Esophagus muscularis mucosa (tissue), 4 donors: ENCODE measurements at regions of chr21 and their contacts with region 1.

Region 1: DNA sequence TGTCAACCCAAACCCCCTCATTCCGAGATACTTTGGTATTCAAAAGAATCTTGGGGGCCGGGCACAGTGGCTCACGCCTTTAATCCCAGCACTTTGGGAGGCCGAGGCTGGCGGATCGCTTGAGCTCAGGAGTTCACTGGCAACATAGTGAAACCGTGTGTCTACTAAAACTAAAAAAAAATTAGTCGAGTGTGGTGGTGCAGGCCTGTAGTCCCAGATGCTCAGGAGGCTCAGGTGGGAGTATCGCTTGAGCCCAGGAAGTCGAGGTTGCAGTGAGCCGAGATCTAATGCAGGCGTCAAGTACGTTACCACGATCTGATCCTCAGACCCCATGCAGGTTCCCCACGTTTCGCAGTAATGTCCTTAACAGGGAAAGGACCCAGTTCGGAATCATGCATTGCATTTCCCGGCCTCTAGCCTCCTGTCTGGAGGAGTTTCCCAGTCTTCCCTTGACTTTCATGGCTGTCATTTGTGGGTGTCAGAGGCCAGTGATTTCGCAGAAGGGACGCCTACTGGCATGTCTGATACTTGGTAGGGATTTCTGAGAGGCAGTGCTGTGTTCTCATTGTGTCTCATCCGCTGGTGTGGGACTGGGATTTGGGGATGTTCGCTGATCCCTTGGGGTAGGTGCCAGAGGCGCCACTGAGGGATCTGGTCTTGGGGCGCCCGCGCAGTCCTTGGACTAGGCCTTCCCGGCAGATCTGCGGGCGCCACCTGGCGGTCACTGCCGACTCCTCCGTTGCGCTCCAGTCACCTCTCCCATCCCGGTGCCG is 39.3 kb upstream of the HMGN1 start:
- DNase-seq: peak; percentile 97
- H3K4me3 ChIP-seq: peak overlapping the region; percentile 48 to 64 (median 53)
- H3K27ac ChIP-seq: peak overlapping the region; percentile 75 to 84 (median 79)
- H3K4me1 ChIP-seq: peaks cover 34 to 63% (median 55%) of the 10 kb centered on the region in 4 donors
- H3K27me3 ChIP-seq: no peaks in the 10 kb centered on the region
- CTCF ChIP-seq: peak; percentile 85 to 99 (median 97)
- EP300 ChIP-seq: no peak
- POLR2A ChIP-seq: no peak

Region 2: GRCh38 chr21:39183237-39184007 is 204.8 kb before region 1 on chr21 and contains the start of gene PSMG1:
- intact Hi-C with region 1: loop called (anchors 10 kb)
- DNase-seq: peak; percentile 97
- H3K4me3 ChIP-seq: peak within 1 kb of the TSS; percentile 68 to 93 (median 90)
- H3K27ac ChIP-seq: peak within 1 kb of the TSS; percentile 83 to 93 (median 89)
- H3K4me1 ChIP-seq: peaks cover 8 to 34% (median 25%) of the 10 kb centered on the region in 4 donors
- H3K27me3 ChIP-seq: no peaks in the 10 kb centered on the region
- CTCF ChIP-seq: no peak
- EP300 ChIP-seq: no peak
- POLR2A ChIP-seq: peak; percentile 18
- total RNA-seq, gene PSMG1: 23.5 to 32.8 (median 25.1) TPM

Region 3: GRCh38 chr21:39313571-39314142 is 74.6 kb before region 1 on chr21 and contains the start of gene BRWD1:
- intact Hi-C with region 1: loop called (anchors 2 kb)
- DNase-seq: peak; percentile 94
- H3K4me3 ChIP-seq: peak within 1 kb of the TSS; percentile 83 to 96 (median 89)
- H3K27ac ChIP-seq: peak within 1 kb of the TSS; percentile 96 to 99 (median 98)
- H3K4me1 ChIP-seq: peaks cover 23 to 68% (median 55%) of the 10 kb centered on the region in 4 donors
- H3K27me3 ChIP-seq: no peaks in the 10 kb centered on the region
- CTCF ChIP-seq: peak; percentile 46 to 52 (median 49)
- EP300 ChIP-seq: no peak
- POLR2A ChIP-seq: peak; percentile 53
- total RNA-seq, gene BRWD1: 55.0 to 104 (median 67.9) TPM

Region 4: DNA sequence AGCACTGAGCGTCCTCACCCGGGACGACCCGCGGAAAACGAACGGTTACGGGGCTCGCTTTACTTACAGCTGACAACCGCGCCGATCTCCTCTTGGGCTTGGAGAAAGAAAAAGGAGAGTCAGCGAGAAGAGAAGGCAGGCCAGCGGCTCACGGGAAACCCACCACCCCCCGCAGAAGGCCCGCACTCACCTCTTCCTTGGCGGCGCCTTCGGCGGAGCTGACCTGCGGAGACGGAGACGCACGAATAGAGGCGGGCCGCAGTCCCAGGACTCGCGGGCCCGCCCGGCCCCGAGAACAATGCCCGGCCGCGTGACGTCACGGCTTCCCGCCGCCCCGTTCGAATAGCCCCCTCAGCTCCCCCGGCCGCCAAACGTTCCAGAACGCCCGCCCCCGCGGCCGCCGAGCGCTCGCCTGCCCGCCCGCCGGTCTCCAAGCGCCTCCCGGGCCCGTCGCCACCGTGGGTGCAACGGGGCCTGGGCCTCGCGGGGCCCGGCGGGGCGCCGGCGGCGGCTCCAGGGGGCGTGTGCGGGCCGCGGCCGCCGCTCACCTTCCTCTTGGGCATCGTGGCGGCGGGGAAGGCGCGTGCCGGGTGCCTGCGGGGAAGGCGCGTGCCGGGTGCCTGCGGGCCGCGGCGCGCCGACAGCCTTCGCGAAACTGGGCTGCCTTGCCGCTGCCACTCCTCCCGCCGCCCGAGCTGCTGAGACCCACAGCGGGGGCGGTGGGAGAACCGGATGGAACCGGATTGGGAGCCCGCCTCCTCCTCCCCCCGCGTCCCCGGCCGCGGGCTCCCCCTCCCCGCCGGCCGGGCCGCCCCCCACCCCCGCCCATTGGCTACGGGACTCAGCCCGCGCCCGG is 39.6 kb before region 1 on chr21 and contains the start of gene HMGN1:
- intact Hi-C with region 1: loop called (anchors 2 kb)
- DNase-seq: peak; percentile 94
- H3K4me3 ChIP-seq: peak within 1 kb of the TSS; percentile 79 to 86 (median 84)
- H3K27ac ChIP-seq: peak within 1 kb of the TSS; percentile 91 to 95 (median 94)
- H3K4me1 ChIP-seq: peaks cover 19 to 48% (median 42%) of the 10 kb centered on the region in 4 donors
- H3K27me3 ChIP-seq: no peaks in the 10 kb centered on the region
- CTCF ChIP-seq: peak in 1 of 3 experiments; percentile 23
- EP300 ChIP-seq: no peak
- POLR2A ChIP-seq: peak; percentile 34
- total RNA-seq, gene HMGN1: 69.1 to 77.4 (median 72.1) TPM

Region 5: GRCh38 chr21:39441502-39442475 is 53.6 kb after region 1 on chr21:
- intact Hi-C with region 1: loop called (anchors 5 kb)
- DNase-seq: no peak
- H3K4me3 ChIP-seq: no peak overlapping the region
- H3K27ac ChIP-seq: no peak overlapping the region
- H3K4me1 ChIP-seq: peaks cover 7 to 23% (median 16%) of the 10 kb centered on the region in 4 donors
- H3K27me3 ChIP-seq: no peaks in the 10 kb centered on the region
- CTCF ChIP-seq: peak; percentile 64 to 73 (median 65)
- EP300 ChIP-seq: no peak
- POLR2A ChIP-seq: no peak